ENCODE measurements at regions of chr11 and their contacts with region 1.

Region 1: GRCh38 chr11:8959546-8960166 is 4.6 kb downstream of the TMEM9B start:
- DNase-seq: peak; percentile 73 to 83 (median 79)
- H3K4me3 ChIP-seq: no peak overlapping the region
- H3K27ac ChIP-seq: no peak overlapping the region
- H3K4me1 ChIP-seq: peaks cover 8 to 19% (median 15%) of the 10 kb centered on the region in 4 experiments
- H3K27me3 ChIP-seq: no peaks in the 10 kb centered on the region

Region 2: GRCh38 chr11:8911029-8911826 is 48.4 kb before region 1 on chr11 and contains the start of gene AKIP1:
- CTCF ChIA-PET with region 1: interaction called, 68 read pairs
- POLR2A ChIA-PET with region 1: interaction called, 5 read pairs
- DNase-seq: peak; percentile 95 to 98 (median 96)
- H3K4me3 ChIP-seq: peak within 1 kb of the TSS; percentile 83 to 96 (median 93)
- H3K27ac ChIP-seq: peak within 1 kb of the TSS; percentile 33 to 85
- H3K4me1 ChIP-seq: peaks cover 15 to 33% (median 27%) of the 10 kb centered on the region in 4 experiments
- H3K27me3 ChIP-seq: peaks cover 0 to 4% (median 0%) of the 10 kb centered on the region in 5 experiments

Region 3: GRCh38 chr11:8941341-8942103 is 18.1 kb before region 1 on chr11:
- CTCF ChIA-PET with region 1: interaction called, 11 read pairs
- POLR2A ChIA-PET with region 1: no interaction called
- DNase-seq: no peak
- H3K4me3 ChIP-seq: no peak overlapping the region
- H3K27ac ChIP-seq: no peak overlapping the region
- H3K4me1 ChIP-seq: no peaks in the 10 kb centered on the region
- H3K27me3 ChIP-seq: no peaks in the 10 kb centered on the region

Region 4: DNA sequence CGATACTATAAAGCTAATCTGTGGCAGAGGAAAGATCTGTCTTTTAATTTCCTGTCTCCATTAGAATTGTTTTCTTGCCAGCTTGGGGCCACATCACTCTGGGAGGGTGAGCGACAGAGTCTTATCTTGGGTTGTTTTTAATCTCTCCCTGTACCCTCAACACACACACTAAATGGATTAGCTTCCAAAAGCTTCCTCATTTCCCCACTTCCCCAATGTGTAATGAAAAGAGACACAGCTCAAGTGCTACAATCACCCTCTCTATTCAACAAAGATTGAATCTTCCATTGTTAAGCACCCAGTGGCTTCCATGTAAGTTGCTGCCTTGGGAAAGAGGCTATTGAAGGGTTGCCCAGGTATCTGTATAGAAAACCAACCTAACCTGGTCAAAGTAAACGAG is 10.8 kb before region 1 on chr11:
- CTCF ChIA-PET with region 1: interaction called, 28 read pairs
- POLR2A ChIA-PET with region 1: no interaction called
- DNase-seq: peak; percentile 35 to 60 (median 43)
- H3K4me3 ChIP-seq: peak overlapping the region in 1 of 7 experiments; percentile 19
- H3K27ac ChIP-seq: no peak overlapping the region
- H3K4me1 ChIP-seq: peaks cover 0 to 12% (median 10%) of the 10 kb centered on the region in 4 experiments
- H3K27me3 ChIP-seq: no peaks in the 10 kb centered on the region

Measured in common myeloid progenitor, CD34-positive (primary cell).